T-cell (primary cell): ENCODE measurements at regions of chr19 and their contacts with region 1.

Region 1: DNA sequence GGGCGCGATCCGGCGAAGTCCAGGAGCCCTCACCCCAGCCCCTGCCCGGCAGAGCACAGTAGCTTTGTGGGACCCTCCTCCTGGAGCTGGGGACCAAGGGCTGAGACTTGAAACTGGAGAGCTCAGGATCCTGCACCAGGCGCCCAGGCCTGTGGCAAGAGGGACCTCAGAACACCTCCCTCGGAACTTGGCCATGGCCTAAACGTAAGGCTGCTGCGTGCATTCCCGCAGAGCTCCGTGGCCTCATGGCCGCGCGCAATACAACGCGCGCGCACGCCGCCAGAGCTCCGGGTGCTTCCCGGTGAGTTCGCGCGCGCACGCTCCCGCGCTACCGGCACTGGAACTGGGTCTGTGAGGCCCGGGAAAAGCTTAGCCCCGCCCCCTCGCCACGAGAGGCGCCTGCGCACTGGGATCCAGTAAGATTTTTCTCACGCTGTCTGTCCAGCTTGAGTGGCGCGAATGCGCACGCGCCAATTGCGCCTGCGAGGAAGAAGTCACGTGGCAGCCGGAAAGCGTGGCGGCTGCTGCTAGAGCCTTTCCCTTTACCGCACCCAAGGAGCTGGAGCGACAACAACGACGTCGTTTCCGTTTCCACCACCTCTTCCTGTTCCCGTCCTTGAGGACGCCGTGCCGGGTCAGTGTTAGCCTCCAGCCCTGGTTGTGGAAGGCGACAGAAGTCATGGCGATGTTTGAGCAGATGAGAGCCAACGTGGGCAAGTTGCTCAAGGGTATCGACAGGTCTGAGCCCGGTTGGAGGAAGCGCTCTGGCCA is at the start of gene EIF3K:
- DNase-seq: peak; percentile 92 to 99 (median 95)
- ATAC-seq: peak; percentile 68 to 82 (median 74)
- H3K4me3 ChIP-seq: peak within 1 kb of the TSS; percentile 95 to 96
- H3K4me3 Mint-ChIP-seq: peak within 1 kb of the TSS; percentile 96 to 98 (median 98)
- H3K27ac ChIP-seq: peak within 1 kb of the TSS; percentile 83
- H3K27ac Mint-ChIP-seq: peak within 1 kb of the TSS; percentile 98
- H3K4me1 ChIP-seq: peaks cover 11 to 62% of the 10 kb centered on the region in 2 experiments
- H3K4me1 Mint-ChIP-seq: peaks cover 50 to 56% (median 52%) of the 10 kb centered on the region in 3 donors
- H3K27me3 ChIP-seq: no peaks in the 10 kb centered on the region
- H3K27me3 Mint-ChIP-seq: no peaks in the 10 kb centered on the region
- total RNA-seq, gene EIF3K: 317 to 352 (median 319) TPM

Region 2: DNA sequence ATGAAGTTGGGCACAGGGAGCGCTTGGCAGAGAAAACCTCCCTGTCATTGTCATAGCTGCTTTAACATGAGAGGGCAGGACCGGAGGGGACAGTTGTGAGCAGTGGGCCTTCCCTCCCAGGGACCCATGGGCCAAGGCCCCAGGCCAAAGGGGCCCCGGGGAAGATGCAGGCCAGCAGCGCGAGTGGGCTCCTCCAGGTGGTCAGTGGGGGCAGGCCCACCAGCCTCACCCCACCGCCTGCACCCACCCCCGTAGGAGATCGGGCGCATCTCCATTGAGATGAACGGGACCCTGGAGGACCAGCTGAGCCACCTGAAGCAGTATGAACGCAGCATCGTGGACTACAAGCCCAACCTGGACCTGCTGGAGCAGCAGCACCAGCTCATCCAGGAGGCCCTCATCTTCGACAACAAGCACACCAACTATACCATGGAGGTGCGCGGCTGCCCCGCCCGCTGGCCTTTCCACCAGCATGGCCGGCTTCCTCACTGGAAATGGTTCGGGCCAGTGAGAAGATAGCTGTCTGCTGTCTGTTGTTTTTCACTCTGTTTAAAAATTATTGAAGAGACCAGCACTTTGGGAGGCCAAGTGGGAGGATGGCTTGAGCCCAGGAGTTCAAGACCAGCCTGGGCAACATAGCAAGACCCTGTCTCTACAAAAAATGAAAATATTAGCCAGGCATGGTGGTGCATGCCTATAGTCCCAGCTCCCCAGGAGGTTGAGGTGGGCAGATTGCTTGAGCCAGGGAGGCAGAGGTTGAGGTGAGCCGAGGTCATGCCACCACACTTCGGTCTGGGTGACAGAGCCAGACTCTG is 106.9 kb after region 1 on chr19:
- CTCF ChIA-PET with region 1: interaction called in 1 of 2 experiments, 13 read pairs
- POLR2A ChIA-PET with region 1: no interaction called
- DNase-seq: no peak
- ATAC-seq: no peak
- H3K4me3 ChIP-seq: no peak overlapping the region
- H3K4me3 Mint-ChIP-seq: no peak overlapping the region
- H3K27ac ChIP-seq: peak overlapping the region; percentile 55
- H3K27ac Mint-ChIP-seq: peak overlapping the region in 1 of 2 donors; percentile 61
- H3K4me1 ChIP-seq: peaks cover 0 to 31% of the 10 kb centered on the region in 2 experiments
- H3K4me1 Mint-ChIP-seq: peaks cover 11 to 15% (median 12%) of the 10 kb centered on the region in 3 donors
- H3K27me3 ChIP-seq: no peaks in the 10 kb centered on the region
- H3K27me3 Mint-ChIP-seq: no peaks in the 10 kb centered on the region

Region 3: DNA sequence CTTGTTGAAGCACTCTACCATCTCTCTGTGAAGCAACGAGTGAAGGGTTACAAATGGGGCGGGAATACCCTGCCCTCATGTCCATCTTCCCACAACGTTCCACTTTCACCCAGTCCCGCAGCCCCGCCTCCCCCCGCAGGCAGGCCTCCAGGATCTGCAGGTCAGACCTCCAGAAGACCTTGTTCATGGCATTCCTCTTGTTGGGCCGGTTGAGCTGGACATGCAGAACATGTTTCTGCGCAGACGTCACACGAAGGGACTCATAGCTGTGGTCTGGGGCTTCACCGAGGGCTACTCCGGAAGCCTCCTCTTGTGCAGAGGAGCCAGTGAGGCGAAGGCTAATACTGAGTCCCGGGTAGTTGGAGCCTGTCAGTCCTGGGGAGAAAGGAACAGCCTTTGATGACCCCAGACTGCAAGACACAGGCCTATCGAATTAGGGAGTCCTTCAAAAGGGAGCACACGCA is 212.4 kb after region 1 on chr19:
- CTCF ChIA-PET with region 1: no interaction called
- POLR2A ChIA-PET with region 1: no interaction called
- DNase-seq: no peak
- ATAC-seq: peak in 3 of 4 experiments; percentile 10 to 18 (median 13)
- H3K4me3 ChIP-seq: peak overlapping the region; percentile 62 to 97
- H3K4me3 Mint-ChIP-seq: peak overlapping the region; percentile 85 to 91 (median 87)
- H3K27ac ChIP-seq: peak overlapping the region; percentile 57
- H3K27ac Mint-ChIP-seq: peak overlapping the region; percentile 91 to 95
- H3K4me1 ChIP-seq: peaks cover 5 to 29% of the 10 kb centered on the region in 2 experiments
- H3K4me1 Mint-ChIP-seq: peaks cover 42 to 45% (median 43%) of the 10 kb centered on the region in 3 donors
- H3K27me3 ChIP-seq: no peaks in the 10 kb centered on the region
- H3K27me3 Mint-ChIP-seq: no peaks in the 10 kb centered on the region